T-cell (primary cell): ENCODE measurements at regions of chr4 and their contacts with region 1.

Region 1: GRCh38 chr4:169659716-169660670 is 39.6 kb downstream of the CLCN3 start:
- DNase-seq: peak in 34 of 35 experiments; percentile 22 to 87 (median 59)
- ATAC-seq: peak; percentile 99 to 100 (median 99)
- H3K4me3 ChIP-seq: peak overlapping the region; percentile 4 to 16
- H3K4me3 Mint-ChIP-seq: peak overlapping the region; percentile 62 to 75 (median 74)
- H3K27ac ChIP-seq: peak overlapping the region; percentile 65
- H3K27ac Mint-ChIP-seq: peak overlapping the region; percentile 88 to 91
- H3K4me1 ChIP-seq: peaks cover 0 to 2% of the 10 kb centered on the region in 2 experiments
- H3K4me1 Mint-ChIP-seq: peaks cover 44 to 47% (median 45%) of the 10 kb centered on the region in 3 donors
- H3K27me3 ChIP-seq: no peaks in the 10 kb centered on the region
- H3K27me3 Mint-ChIP-seq: no peaks in the 10 kb centered on the region

Region 2: DNA sequence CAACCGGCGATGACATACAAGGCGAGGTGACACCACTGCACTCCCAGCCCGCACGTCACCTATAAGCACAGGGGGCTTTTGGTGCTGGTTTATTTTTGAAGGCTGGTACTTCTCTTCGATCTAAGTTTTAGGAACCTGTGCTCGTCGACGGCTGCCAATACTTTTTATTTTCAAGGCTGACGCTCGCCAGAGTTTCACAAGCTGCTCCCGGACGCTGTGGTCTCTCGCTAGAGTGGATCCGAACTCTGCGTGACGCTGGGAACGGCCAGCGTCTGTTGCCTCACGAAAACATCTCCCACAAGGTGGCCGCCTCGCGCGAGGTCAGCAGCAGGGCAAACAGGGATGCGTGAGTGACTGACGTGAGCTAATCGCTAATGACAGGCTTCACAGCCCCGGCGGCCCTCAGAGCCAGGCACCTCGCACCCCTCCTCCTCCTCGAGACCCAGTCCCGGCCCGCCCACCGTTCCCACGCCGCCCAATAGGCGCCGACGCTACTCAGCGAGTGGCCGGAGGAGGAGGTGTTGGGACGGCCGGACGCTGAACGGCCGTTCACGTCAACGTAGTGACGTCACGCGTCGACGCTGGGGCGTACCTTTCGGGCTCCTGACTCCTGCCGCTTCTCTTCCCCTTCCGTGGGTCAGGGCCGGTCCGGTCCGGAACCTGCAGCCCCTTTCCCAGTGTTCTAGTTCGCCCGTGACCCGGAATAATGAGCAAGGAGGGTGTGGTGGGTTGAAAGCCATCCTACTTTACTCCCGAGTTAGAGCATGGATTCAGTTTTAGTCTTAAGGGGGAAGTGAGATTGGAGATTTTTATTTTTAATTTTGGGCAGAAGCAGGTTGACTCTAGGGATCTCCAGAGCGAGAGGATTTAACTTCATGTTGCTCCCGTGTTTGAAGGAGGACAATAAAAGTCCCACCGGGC is 39.8 kb before region 1 on chr4 and contains the start of gene CLCN3:
- CTCF ChIA-PET with region 1: interaction called in 1 of 2 experiments, 10 read pairs
- POLR2A ChIA-PET with region 1: interaction called, 4 to 32 read pairs
- DNase-seq: peak; percentile 75 to 93 (median 85)
- ATAC-seq: peak; percentile 74 to 85 (median 81)
- H3K4me3 ChIP-seq: peak within 1 kb of the TSS; percentile 85 to 95
- H3K4me3 Mint-ChIP-seq: peak within 1 kb of the TSS; percentile 97 to 99 (median 99)
- H3K27ac ChIP-seq: peak within 1 kb of the TSS; percentile 98
- H3K27ac Mint-ChIP-seq: peak within 1 kb of the TSS; percentile 99
- H3K4me1 ChIP-seq: peaks cover 22 to 28% of the 10 kb centered on the region in 2 experiments
- H3K4me1 Mint-ChIP-seq: peaks cover 65 to 69% (median 66%) of the 10 kb centered on the region in 3 donors
- H3K27me3 ChIP-seq: no peaks in the 10 kb centered on the region
- H3K27me3 Mint-ChIP-seq: no peaks in the 10 kb centered on the region
- total RNA-seq, gene CLCN3: 17.3 to 33.7 (median 30.8) TPM